B cell (primary cell): ENCODE measurements at regions of chr14 and their contacts with region 1.

Region 1: DNA sequence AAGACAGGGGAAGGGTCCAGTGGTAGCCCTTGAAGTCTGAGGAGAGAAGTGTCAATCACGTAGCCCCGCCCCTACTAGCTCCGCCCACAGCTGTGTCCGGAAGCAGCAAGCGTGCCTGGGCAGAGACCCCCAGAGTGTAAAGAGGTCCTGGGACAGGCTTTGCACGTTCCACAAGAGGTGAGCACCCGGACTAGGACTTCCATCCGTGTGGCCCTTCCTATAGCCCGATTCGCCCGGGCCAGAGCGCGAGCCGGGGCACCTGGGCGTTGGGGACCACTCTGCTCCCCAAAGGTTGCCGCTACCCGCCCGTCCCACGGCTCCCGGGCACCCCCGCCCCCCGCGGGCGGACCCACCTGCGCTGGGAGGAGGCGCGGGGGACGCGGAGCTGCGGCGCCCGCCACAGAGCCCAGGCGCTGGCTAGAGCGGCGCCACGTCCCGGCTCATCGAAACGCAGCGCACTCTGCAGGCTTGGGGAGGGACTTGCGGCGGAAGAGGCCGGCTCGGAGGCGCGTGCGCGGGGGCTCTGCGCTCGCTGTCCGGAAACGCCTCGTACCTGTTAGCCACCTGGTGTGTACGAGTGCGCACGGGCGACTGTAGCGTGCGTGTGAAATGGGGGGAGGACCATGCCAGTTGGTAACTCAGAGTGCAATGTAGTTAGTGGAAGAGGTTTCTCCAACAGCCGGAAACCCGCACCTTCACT is at the start of gene RABGGTA:
- DNase-seq: peak; percentile 98
- ATAC-seq: peak; percentile 87
- H3K4me3 ChIP-seq: peak within 1 kb of the TSS; percentile 45 to 96 (median 93)
- H3K4me3 Mint-ChIP-seq: peak within 1 kb of the TSS; percentile 94
- H3K27ac ChIP-seq: peak within 1 kb of the TSS; percentile 93 to 97
- H3K27ac Mint-ChIP-seq: peak within 1 kb of the TSS; percentile 94
- H3K4me1 ChIP-seq: peaks cover 32 to 39% of the 10 kb centered on the region in 2 donors
- H3K4me1 Mint-ChIP-seq: peaks cover 48% of the 10 kb centered on the region
- H3K27me3 ChIP-seq: no peaks in the 10 kb centered on the region
- H3K27me3 Mint-ChIP-seq: no peaks in the 10 kb centered on the region
- CTCF ChIP-seq: peak; percentile 75
- total RNA-seq, gene RABGGTA: 57.9 and 70.1 TPM in 2 replicates

Region 2: DNA sequence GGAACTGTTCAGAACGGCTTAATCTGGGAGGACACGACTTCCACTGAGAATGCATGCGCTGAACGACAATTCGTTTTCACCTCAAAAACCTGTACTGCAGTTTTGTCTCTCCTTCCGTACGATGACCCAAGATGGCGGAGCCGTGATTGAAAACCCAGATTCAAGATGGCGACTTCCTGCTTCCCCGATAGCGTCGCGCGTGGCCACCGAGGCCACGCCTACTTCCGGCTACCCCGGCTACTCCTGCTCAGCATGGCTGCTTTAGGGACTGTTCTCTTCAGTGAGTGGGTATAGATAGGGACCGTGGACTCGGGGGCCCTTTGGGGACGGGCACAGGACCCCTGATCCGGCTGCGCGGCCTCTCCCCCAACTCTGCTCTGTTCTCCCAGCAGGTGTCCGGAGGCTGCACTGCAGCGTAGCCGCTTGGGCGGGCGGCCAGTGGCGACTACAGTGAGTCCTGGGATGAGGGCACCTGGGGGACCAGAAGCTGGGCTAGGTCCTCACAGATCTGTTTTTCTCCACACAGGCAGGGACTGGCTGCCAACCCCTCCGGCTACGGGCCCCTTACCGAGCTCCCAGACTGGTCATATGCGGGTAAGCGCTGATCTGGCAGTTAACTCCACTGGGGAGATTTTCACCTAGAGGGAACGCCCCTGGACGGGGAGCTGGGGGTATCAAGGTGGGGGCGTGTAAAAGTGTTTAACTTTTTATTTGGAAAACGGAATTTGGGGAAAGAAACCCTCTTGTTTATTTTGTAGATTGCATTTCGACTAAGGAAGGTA is 1441.4 kb before region 1 on chr14 and contains the start of gene MRPL52:
- CTCF ChIA-PET with region 1: no interaction called
- POLR2A ChIA-PET with region 1: no interaction called
- intact Hi-C with region 1: no loop called
- DNase-seq: peak; percentile 95
- ATAC-seq: peak; percentile 94
- H3K4me3 ChIP-seq: peak within 1 kb of the TSS; percentile 68 to 92 (median 84)
- H3K4me3 Mint-ChIP-seq: peak within 1 kb of the TSS; percentile 84
- H3K27ac ChIP-seq: peak within 1 kb of the TSS; percentile 87 to 91
- H3K27ac Mint-ChIP-seq: peak within 1 kb of the TSS; percentile 93
- H3K4me1 ChIP-seq: peaks cover 18 to 22% of the 10 kb centered on the region in 2 donors
- H3K4me1 Mint-ChIP-seq: peaks cover 30% of the 10 kb centered on the region
- H3K27me3 ChIP-seq: no peaks in the 10 kb centered on the region
- H3K27me3 Mint-ChIP-seq: no peaks in the 10 kb centered on the region
- CTCF ChIP-seq: no peak
- total RNA-seq, gene MRPL52: 91.6 and 93.0 TPM in 2 replicates

Region 3: DNA sequence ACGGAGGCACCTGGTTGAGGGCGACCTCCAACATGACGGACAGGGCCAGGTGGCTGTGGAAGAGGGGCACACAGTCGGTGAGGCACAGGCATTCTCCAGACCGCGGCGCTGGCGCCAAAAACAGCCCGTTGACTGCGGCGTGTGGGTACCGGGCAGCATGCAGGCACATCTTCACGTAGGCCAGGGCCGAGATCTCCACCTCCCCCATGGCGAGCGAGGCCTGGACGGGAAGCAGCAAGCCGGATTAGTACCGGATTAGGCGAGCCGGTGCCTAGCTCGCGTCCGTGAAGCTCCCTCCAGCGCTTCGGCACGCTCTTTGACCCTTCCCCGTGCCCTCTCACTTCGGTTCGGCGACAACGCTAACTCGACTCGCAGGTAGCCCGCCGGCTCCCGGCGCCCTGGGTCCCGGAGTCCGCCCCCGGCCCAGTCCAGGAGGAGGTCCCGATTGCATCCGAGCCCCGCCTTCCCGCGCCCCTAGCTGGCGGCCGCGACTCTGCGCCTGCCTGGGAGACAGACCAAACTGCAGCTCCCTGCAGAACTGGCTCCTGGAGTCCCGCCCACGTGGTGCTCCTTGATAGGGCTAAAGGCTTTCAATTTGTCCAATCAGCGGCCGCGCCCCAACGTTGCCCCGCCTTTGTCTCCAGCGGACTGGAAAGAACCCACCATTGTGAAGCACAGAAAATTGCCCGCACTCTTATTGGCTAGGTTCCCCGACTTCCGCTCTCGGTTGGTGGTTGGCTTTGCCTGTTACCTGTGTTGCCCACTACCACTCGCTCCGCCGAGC is 130.0 kb before region 1 on chr14 and contains the start of gene EMC9:
- CTCF ChIA-PET with region 1: no interaction called
- POLR2A ChIA-PET with region 1: interaction called, 6 read pairs
- intact Hi-C with region 1: loop called (anchors 10 kb)
- DNase-seq: peak; percentile 99
- ATAC-seq: peak; percentile 89
- H3K4me3 ChIP-seq: peak within 1 kb of the TSS; percentile 67 to 93 (median 82)
- H3K4me3 Mint-ChIP-seq: peak within 1 kb of the TSS; percentile 96
- H3K27ac ChIP-seq: peak within 1 kb of the TSS; percentile 63 to 80
- H3K27ac Mint-ChIP-seq: peak within 1 kb of the TSS; percentile 95
- H3K4me1 ChIP-seq: peaks cover 33 to 50% of the 10 kb centered on the region in 2 donors
- H3K4me1 Mint-ChIP-seq: peaks cover 64% of the 10 kb centered on the region
- H3K27me3 ChIP-seq: no peaks in the 10 kb centered on the region
- H3K27me3 Mint-ChIP-seq: no peaks in the 10 kb centered on the region
- CTCF ChIP-seq: peak; percentile 37
- total RNA-seq, gene EMC9: 24.7 and 26.4 TPM in 2 replicates

Region 4: DNA sequence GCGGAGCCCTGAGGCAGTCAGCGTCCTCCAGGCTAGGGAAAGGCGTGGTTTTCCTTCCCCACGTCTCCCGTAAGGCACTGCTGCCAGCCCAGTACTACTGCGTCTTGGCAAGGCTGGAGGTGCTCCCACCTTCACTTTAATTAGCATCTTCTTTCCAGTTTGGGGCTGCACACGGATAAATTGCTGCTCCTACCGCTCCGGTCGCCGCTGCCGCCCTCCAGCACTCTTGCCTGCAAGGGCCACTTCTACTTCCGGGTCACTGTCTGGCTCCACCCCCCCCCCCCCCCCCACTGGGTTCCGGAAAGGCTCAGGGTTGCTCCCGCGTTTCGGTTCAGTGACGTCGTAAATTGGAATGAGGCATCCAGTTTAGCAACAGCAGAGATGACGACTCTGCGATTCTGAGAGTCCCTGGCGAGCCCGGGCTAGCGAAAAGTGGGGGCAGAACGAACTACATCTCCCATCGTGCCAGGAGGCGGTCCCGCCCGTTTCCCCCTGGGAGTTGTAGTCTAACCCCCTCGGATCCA is 39.1 kb before region 1 on chr14 and contains the start of gene NEDD8:
- CTCF ChIA-PET with region 1: interaction called, 4 read pairs
- POLR2A ChIA-PET with region 1: interaction called, 10 read pairs
- intact Hi-C with region 1: loop called (anchors 1 kb)
- DNase-seq: peak; percentile 95
- ATAC-seq: peak; percentile 86
- H3K4me3 ChIP-seq: peak within 1 kb of the TSS; percentile 75 to 100 (median 97)
- H3K4me3 Mint-ChIP-seq: peak within 1 kb of the TSS; percentile 96
- H3K27ac ChIP-seq: peak within 1 kb of the TSS; percentile 36 to 67
- H3K27ac Mint-ChIP-seq: peak within 1 kb of the TSS; percentile 95
- H3K4me1 ChIP-seq: peaks cover 18 to 24% of the 10 kb centered on the region in 2 donors
- H3K4me1 Mint-ChIP-seq: peaks cover 55% of the 10 kb centered on the region
- H3K27me3 ChIP-seq: no peaks in the 10 kb centered on the region
- H3K27me3 Mint-ChIP-seq: no peaks in the 10 kb centered on the region
- CTCF ChIP-seq: no peak
- total RNA-seq, gene NEDD8: 86.6 and 98.5 TPM in 2 replicates

Region 5: DNA sequence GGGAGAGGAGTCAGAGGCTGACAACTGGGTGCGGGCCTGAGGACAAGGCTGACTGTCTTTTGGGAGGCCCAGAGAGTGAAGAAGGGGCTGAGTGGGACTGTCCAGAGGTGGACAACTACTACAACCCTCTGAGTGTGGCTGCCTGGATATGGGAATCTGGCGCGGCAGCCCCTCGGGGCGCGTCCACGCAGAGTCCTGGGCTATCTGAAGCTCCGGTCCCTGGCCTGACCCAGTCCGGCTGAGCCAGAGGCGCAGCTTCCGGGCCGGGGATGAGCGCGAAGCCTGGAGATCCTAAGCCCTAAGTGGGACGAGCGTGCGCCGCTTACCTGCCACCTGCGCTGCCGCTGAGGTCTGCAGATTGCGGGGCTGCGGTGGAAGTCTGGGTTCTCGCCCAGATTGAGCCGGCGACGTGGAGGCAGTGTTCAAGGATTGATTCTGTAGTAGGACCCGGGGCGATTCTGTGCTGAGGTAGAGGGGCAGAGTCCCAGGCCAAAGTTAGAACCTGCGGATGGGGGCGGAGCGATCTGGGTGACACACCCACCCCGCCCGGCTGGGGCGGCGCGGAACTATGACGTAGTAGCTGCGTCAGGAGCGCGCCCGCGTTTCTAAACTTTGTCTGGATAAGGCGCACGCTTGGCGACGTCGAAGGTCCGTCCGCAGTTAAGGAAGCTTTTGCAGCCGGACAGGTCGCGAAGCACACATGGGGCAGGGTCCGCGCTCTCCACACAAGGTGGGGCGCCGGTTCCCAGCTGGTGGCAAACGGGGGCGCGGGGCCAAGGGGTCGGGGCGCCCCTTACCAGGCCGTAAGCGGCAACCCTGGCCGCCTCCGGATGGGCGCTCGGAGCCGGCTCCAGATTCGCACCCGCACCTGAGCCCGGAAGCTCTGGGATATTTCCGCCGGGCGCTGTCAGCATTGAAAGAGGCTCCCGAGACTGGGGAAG is 28.2 kb after region 1 on chr14 and contains the starts of genes DHRS1 and NOP9:
- CTCF ChIA-PET with region 1: interaction called, 40 read pairs
- POLR2A ChIA-PET with region 1: interaction called, 5 read pairs
- intact Hi-C with region 1: loop called (anchors 1 kb)
- DNase-seq: peak; percentile 95
- ATAC-seq: peak; percentile 86
- H3K4me3 ChIP-seq: peak within 1 kb of the TSS; percentile 58 to 93 (median 77)
- H3K4me3 Mint-ChIP-seq: peak within 1 kb of the TSS; percentile 96
- H3K27ac ChIP-seq: peak within 1 kb of the TSS; percentile 79 to 83
- H3K27ac Mint-ChIP-seq: peak within 1 kb of the TSS; percentile 98
- H3K4me1 ChIP-seq: peaks cover 30 to 41% of the 10 kb centered on the region in 2 donors
- H3K4me1 Mint-ChIP-seq: peaks cover 48% of the 10 kb centered on the region
- H3K27me3 ChIP-seq: no peaks in the 10 kb centered on the region
- H3K27me3 Mint-ChIP-seq: no peaks in the 10 kb centered on the region
- CTCF ChIP-seq: no peak
- total RNA-seq, gene DHRS1: 42.7 and 43.7 TPM in 2 replicates
- total RNA-seq, gene NOP9: 22.6 and 24.5 TPM in 2 replicates

Region 6: DNA sequence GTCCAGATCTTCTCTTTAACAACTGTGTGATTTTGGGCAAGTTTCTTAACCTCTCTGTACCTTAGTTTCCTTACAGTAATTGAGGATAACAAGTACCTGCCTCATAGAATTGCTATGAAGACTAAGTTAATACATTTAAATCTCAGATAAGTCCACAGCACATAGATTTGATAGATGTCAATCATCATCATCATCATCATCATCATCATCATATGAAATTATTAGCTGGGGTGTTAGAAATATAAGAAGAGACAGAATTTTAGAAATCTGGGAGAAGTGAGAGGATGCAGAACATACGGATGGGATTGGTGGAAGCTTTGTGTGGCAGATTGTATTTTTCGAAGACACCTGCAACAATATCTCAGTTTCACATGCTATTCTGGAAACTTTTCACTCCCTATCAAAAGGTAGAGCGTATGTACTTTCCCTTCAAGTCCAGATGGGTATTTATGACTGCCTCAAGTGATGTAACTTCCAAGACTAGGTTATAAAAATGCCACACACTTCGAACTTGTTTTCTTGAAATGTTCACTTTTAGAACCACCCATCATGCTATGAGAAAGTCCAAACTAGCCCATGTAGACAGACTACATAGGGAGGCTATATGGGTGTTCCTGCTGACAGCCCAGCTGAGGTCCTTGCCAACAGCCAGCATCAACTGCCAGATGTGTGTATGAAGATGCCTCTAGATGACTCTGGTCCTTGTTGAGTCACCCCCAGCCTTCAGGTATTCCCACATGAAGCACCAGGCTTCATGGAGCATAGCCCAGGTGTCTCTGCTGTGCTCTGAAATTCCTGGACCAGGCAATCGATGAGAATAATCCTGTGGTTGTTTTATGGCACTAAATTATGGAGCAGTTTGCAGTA is 192.0 kb after region 1 on chr14:
- CTCF ChIA-PET with region 1: no interaction called
- POLR2A ChIA-PET with region 1: no interaction called
- intact Hi-C with region 1: no loop called
- DNase-seq: no peak
- ATAC-seq: no peak
- H3K4me3 ChIP-seq: no peak overlapping the region
- H3K4me3 Mint-ChIP-seq: no peak overlapping the region
- H3K27ac ChIP-seq: no peak overlapping the region
- H3K27ac Mint-ChIP-seq: no peak overlapping the region
- H3K4me1 ChIP-seq: peaks cover 0 to 2% of the 10 kb centered on the region in 2 donors
- H3K4me1 Mint-ChIP-seq: peaks cover 6% of the 10 kb centered on the region
- H3K27me3 ChIP-seq: no peaks in the 10 kb centered on the region
- H3K27me3 Mint-ChIP-seq: no peaks in the 10 kb centered on the region
- CTCF ChIP-seq: no peak